Body of pancreas (tissue), 4 donors: ENCODE measurements at regions of chr6 and their contacts with region 1.

Region 1: GRCh38 chr6:121430514-121431460 is 4.7 kb upstream of the GJA1 start:
- DNase-seq: peak in 1 of 4 donors; percentile 30
- ATAC-seq: peak; percentile 81
- H3K4me3 ChIP-seq: no peak overlapping the region
- H3K27ac ChIP-seq: no peak overlapping the region
- H3K4me1 ChIP-seq: peaks cover 5% of the 10 kb centered on the region
- H3K27me3 ChIP-seq: no peaks in the 10 kb centered on the region
- CTCF ChIP-seq: peak; percentile 28 to 93 (median 88)
- POLR2A ChIP-seq: no peak

Region 2: GRCh38 chr6:122033539-122034181 is 602.9 kb after region 1 on chr6:
- intact Hi-C with region 1: loop called (anchors 10 kb)
- DNase-seq: peak in 1 of 4 donors; percentile 5
- ATAC-seq: peak; percentile 97
- H3K4me3 ChIP-seq: no peak overlapping the region
- H3K27ac ChIP-seq: no peak overlapping the region
- H3K4me1 ChIP-seq: no peaks in the 10 kb centered on the region
- H3K27me3 ChIP-seq: no peaks in the 10 kb centered on the region
- CTCF ChIP-seq: peak in 6 of 7 experiments; percentile 48 to 81 (median 73)
- POLR2A ChIP-seq: no peak

Region 3: DNA sequence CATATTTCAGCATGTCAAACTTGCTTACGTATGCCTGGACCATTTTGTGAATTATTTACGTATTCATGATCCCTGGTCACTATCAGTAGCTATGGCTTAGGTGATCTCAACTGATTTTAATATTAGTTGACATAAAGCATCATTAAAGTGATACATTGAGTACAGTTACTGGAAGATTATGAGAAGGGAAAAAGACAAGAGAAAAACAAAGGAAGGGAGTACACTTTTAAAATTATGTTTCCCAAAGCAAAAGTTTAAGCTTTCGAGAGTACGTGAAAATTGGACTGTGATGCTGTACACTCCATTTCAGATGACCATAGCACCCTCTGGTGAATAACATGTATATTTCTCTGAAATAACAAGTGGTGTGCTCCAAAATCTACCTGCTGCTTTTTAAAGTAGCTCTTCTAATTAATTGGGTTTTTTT is 753.6 kb after region 1 on chr6:
- intact Hi-C with region 1: loop called (anchors 5 kb)
- DNase-seq: no peak
- ATAC-seq: peak; percentile 78
- H3K4me3 ChIP-seq: no peak overlapping the region
- H3K27ac ChIP-seq: no peak overlapping the region
- H3K4me1 ChIP-seq: no peaks in the 10 kb centered on the region
- H3K27me3 ChIP-seq: no peaks in the 10 kb centered on the region
- CTCF ChIP-seq: peak in 6 of 7 experiments; percentile 28 to 67 (median 56)
- POLR2A ChIP-seq: no peak